Naive thymus-derived CD4-positive, alpha-beta T cell (primary cell): ENCODE measurements at regions of chr5 and their contacts with region 1.

Region 1: GRCh38 chr5:113330533-113331208 is 104.1 kb downstream of the TSSK1B start:
- DNase-seq: peak in 7 of 9 donors; percentile 56 to 80 (median 73)
- ATAC-seq: peak; percentile 91
- H3K4me3 ChIP-seq: no peak overlapping the region
- H3K4me3 Mint-ChIP-seq: peak overlapping the region in 9 of 10 donors; percentile 8 to 63 (median 40)
- H3K27ac ChIP-seq: no peak overlapping the region
- H3K27ac Mint-ChIP-seq: peak overlapping the region in 7 of 9 donors; percentile 3 to 82 (median 71)
- H3K4me1 ChIP-seq: peaks cover 0 to 4% of the 10 kb centered on the region in 2 donors
- H3K4me1 Mint-ChIP-seq: peaks cover 3 to 21% (median 19%) of the 10 kb centered on the region in 7 donors
- H3K27me3 ChIP-seq: peaks cover 0 to under 1% of the 10 kb centered on the region in 2 donors
- H3K27me3 Mint-ChIP-seq: peaks cover 0 to 13% (median 2%) of the 10 kb centered on the region in 5 donors

Region 2: DNA sequence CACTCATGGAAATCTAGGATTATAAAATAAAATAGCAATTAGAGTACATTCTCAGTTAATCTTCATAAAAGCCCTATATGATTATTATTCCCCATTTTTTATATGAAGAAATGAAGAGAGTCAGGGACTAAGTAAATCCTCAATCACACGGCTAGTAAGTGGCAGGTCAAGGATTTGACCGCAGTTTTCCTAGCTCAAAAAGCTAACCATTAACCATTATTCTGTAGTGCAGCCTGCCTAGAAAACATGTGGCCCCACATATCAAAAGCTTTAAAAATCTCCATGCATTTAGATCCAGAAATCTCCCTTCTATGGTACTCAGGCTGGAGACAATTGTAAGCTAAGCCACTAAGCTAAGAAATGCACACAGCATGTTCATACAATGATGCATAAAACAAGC is 933.0 kb before region 1 on chr5:
- CTCF ChIA-PET with region 1: no interaction called
- POLR2A ChIA-PET with region 1: no interaction called
- intact Hi-C with region 1: no loop called
- DNase-seq: no peak
- ATAC-seq: no peak
- H3K4me3 ChIP-seq: no peak overlapping the region
- H3K4me3 Mint-ChIP-seq: no peak overlapping the region
- H3K27ac ChIP-seq: no peak overlapping the region
- H3K27ac Mint-ChIP-seq: no peak overlapping the region
- H3K4me1 ChIP-seq: no peaks in the 10 kb centered on the region
- H3K4me1 Mint-ChIP-seq: no peaks in the 10 kb centered on the region
- H3K27me3 ChIP-seq: no peaks in the 10 kb centered on the region
- H3K27me3 Mint-ChIP-seq: peaks cover 14 to 30% (median 22%) of the 10 kb centered on the region in 5 donors

Region 3: DNA sequence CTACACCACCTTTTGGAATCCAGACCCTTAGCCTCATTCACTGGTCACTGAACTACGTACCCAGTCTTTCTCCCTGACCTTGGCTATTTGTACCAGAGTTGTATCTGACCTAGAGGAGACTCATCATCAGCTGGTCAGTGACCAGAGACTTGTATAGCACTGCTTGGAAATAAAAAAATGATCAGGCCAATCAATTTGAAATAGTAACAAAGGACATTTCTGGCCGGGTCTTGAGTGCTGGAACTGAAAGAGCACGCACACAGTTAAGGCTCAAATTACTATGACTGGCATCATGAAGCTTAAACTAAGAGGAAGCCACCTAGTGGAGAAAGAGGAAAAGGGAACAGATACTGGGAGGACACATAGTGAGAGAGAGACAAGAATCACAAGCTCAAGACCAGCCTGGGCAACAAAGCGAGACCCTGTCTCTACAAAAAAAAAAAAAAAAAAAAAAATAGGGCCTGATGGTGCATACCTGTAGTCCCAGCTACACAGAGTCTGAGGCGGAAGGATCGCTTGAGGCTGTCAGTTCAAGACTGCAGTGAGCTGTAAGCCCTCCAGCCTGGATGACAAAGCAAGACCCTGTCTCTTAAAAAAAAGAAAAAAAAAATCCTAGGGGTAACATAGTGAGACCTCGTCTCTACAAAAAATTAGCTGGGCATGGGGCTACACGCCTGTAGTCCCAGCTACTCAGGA is 482.4 kb before region 1 on chr5:
- CTCF ChIA-PET with region 1: no interaction called
- POLR2A ChIA-PET with region 1: no interaction called
- intact Hi-C with region 1: loop called in 1 of 2 experiments (anchors 10 kb)
- DNase-seq: peak in 7 of 9 donors; percentile 8 to 51 (median 40)
- ATAC-seq: peak; percentile 97
- H3K4me3 ChIP-seq: no peak overlapping the region
- H3K4me3 Mint-ChIP-seq: peak overlapping the region in 2 of 10 donors; percentile 16 to 41
- H3K27ac ChIP-seq: no peak overlapping the region
- H3K27ac Mint-ChIP-seq: peak overlapping the region in 3 of 9 donors; percentile 53 to 58 (median 53)
- H3K4me1 ChIP-seq: no peaks in the 10 kb centered on the region
- H3K4me1 Mint-ChIP-seq: peaks cover 4 to 8% (median 6%) of the 10 kb centered on the region in 7 donors
- H3K27me3 ChIP-seq: no peaks in the 10 kb centered on the region
- H3K27me3 Mint-ChIP-seq: peaks cover 0 to 20% (median 5%) of the 10 kb centered on the region in 5 donors

Region 4: GRCh38 chr5:113043491-113043931 is 287.2 kb before region 1 on chr5:
- CTCF ChIA-PET with region 1: no interaction called
- POLR2A ChIA-PET with region 1: no interaction called
- intact Hi-C with region 1: loop called in 1 of 2 experiments (anchors 1 kb)
- DNase-seq: peak in 1 of 9 donors; percentile 21
- ATAC-seq: no peak
- H3K4me3 ChIP-seq: no peak overlapping the region
- H3K4me3 Mint-ChIP-seq: no peak overlapping the region
- H3K27ac ChIP-seq: no peak overlapping the region
- H3K27ac Mint-ChIP-seq: no peak overlapping the region
- H3K4me1 ChIP-seq: no peaks in the 10 kb centered on the region
- H3K4me1 Mint-ChIP-seq: peaks cover 0 to 9% (median 4%) of the 10 kb centered on the region in 7 donors
- H3K27me3 ChIP-seq: no peaks in the 10 kb centered on the region
- H3K27me3 Mint-ChIP-seq: peaks cover 0 to 3% (median 0%) of the 10 kb centered on the region in 5 donors

Region 5: DNA sequence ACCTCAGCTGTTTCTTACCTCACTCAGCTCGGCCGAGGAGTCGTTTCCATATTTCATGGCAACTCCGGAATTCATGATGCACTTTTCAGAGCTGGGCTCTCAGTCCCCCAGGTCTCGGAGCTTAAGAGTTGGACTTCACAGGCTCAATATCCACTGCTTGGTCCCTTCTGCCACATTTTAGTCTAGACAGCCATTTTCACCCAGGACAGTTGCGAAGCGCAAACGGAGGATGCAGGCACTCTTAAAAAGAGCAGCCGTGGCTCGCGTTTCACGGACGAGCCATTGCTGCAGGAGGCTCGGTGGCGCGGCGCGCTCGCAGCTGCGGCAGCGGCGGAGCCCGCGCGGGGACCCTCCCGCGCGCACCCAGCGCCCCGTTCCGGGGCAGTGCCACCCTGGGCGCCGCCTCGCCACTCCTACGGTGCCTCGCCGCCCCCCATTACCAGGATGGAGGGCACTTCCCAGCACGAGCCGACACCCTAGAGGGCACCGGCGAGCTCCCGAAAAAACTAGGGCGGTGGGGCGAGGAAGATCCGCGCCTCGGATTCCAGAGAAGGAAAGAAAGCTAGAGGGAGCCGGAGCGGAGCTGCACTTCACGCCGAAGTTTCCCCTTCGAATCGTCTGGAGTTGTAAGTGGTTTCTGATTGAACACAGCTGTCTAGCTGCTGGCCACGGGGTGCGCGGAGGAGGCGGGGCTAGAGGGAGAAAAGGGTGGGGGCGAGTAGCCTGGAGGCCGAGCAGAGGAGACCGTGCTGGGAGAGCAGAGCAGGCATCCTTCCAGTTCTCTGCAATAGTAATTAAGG is 36.2 kb before region 1 on chr5:
- CTCF ChIA-PET with region 1: no interaction called
- POLR2A ChIA-PET with region 1: no interaction called
- intact Hi-C with region 1: loop called (anchors 1 kb)
- DNase-seq: peak; percentile 30 to 72 (median 62)
- ATAC-seq: peak; percentile 92
- H3K4me3 ChIP-seq: peak overlapping the region; percentile 64
- H3K4me3 Mint-ChIP-seq: peak overlapping the region; percentile 88 to 96 (median 92)
- H3K27ac ChIP-seq: peak overlapping the region; percentile 43
- H3K27ac Mint-ChIP-seq: peak overlapping the region in 6 of 9 donors; percentile 21 to 86 (median 46)
- H3K4me1 ChIP-seq: peaks cover 8 to 11% of the 10 kb centered on the region in 2 donors
- H3K4me1 Mint-ChIP-seq: peaks cover 13 to 28% (median 21%) of the 10 kb centered on the region in 7 donors
- H3K27me3 ChIP-seq: no peaks in the 10 kb centered on the region
- H3K27me3 Mint-ChIP-seq: peaks cover 30 to 82% (median 59%) of the 10 kb centered on the region in 5 donors

Region 6: GRCh38 chr5:113344973-113345940 is 14.6 kb after region 1 on chr5:
- CTCF ChIA-PET with region 1: no interaction called
- POLR2A ChIA-PET with region 1: no interaction called
- intact Hi-C with region 1: no loop called
- DNase-seq: no peak
- ATAC-seq: no peak
- H3K4me3 ChIP-seq: no peak overlapping the region
- H3K4me3 Mint-ChIP-seq: no peak overlapping the region
- H3K27ac ChIP-seq: no peak overlapping the region
- H3K27ac Mint-ChIP-seq: no peak overlapping the region
- H3K4me1 ChIP-seq: no peaks in the 10 kb centered on the region
- H3K4me1 Mint-ChIP-seq: peaks cover 0 to 4% (median 0%) of the 10 kb centered on the region in 7 donors
- H3K27me3 ChIP-seq: peaks cover 0 to 2% of the 10 kb centered on the region in 2 donors
- H3K27me3 Mint-ChIP-seq: peaks cover 11 to 46% (median 17%) of the 10 kb centered on the region in 5 donors

Region 7: DNA sequence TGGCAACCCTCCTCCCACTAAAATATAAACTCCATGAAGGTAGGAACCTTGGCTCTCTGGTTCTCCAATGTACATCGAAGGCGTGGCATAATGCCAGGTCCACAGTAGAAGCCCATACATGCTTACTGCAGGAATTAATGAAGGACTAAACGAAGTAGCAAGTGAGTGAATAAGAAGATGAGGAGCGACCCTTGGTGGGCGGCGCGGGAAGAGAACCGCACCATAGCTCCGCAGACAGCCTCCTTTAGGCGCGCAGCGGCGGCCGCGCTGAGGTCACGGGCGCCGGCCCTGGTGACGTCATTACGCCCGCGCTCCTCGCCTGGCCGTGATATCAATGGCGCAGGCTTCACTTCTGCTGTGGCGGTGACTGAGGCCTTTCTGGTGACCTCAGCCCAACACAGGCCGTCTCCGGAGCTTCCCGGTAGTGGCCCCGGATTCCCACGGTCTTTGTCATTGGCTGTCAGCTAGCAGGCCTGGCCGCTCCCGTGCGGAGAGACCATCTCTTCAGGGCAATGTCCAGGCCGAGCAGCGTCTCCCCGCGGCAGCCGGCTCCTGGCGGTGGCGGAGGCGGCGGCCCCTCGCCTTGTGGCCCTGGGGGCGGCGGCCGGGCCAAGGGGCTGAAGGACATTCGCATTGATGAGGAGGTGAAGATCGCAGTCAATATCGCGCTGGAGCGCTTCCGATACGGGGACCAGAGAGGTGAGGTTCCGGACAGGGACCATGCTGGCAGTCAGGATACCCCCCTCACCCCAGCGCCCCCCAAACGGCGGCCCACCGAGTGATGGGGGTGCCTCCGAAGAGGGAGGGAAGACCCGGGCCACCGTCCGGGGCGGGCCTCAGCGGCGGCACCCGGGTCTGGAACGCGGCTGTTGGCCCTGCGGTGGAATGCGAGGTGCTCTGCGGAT is 183.0 kb after region 1 on chr5 and contains the start of gene YTHDC2:
- CTCF ChIA-PET with region 1: no interaction called
- POLR2A ChIA-PET with region 1: interaction called, 4 read pairs
- intact Hi-C with region 1: loop called (anchors 1 kb)
- DNase-seq: peak; percentile 79 to 89 (median 87)
- ATAC-seq: peak; percentile 97
- H3K4me3 ChIP-seq: peak within 1 kb of the TSS; percentile 85
- H3K4me3 Mint-ChIP-seq: peak within 1 kb of the TSS; percentile 86 to 98 (median 94)
- H3K27ac ChIP-seq: peak within 1 kb of the TSS; percentile 94
- H3K27ac Mint-ChIP-seq: peak within 1 kb of the TSS; percentile 86 to 98 (median 97)
- H3K4me1 ChIP-seq: peaks cover 6 to 9% of the 10 kb centered on the region in 2 donors
- H3K4me1 Mint-ChIP-seq: peaks cover 27 to 51% (median 44%) of the 10 kb centered on the region in 7 donors
- H3K27me3 ChIP-seq: no peaks in the 10 kb centered on the region
- H3K27me3 Mint-ChIP-seq: peaks cover 12 to 19% (median 13%) of the 10 kb centered on the region in 5 donors
- total RNA-seq, gene YTHDC2: 27.7 to 53.6 (median 49.2) TPM